IMR-90 (cell line): ENCODE measurements at regions of chr5 and their contacts with region 1.

Region 1: DNA sequence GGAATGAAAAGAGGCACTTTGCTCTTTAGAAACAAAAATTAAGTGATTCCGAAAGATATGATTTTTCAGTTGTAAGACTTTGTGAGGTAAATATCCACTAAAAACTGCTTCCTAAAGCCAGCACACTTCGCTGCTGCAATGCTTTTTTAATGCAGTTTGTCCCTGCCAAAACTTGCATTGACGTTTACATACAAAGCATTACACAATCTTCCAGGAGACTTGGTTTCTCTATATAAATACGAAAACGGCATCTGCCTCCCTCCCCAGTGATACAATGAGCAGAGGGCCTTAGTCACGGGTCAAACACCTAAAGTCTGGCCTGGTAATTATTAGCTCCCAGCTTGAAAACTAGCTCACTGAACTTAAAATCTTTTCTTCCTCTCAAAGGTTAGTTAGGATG is 170.7 kb downstream of the TSSK1B start:
- DNase-seq: peak; percentile 96
- ATAC-seq: peak; percentile 85
- H3K4me3 ChIP-seq: no peak overlapping the region
- H3K27ac ChIP-seq: peak overlapping the region; percentile 58; the same call in 1 of the 2 replicates
- H3K4me1 ChIP-seq: peaks cover 11% of the 10 kb centered on the region; the same call in 1 of the 2 replicates
- H3K27me3 ChIP-seq: no peaks in the 10 kb centered on the region
- CTCF ChIP-seq: no peak
- POLR2A ChIP-seq: no peak
- RAD21 ChIP-seq: no peak

Region 2: DNA sequence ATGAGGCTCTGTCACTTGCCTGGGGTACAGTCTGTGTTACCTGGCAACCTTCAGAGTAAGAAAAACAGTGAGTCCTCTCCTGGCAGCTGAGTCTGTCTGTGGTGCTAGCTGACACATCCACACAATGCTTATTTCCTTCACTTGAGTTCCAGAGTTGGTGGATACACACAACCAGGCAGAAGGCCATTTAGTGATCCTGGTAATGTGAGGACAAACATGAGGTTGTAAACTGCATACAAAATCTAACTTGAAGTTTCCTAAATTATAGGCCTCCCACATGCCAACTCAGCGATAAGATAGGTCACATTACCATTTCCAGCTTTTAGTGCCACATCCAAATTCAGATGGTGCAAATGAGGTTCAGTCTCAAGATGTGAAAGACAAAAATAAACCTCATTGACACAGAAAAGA is 161.9 kb before region 1 on chr5:
- CTCF ChIA-PET with region 1: no interaction called
- POLR2A ChIA-PET with region 1: no interaction called
- dilution Hi-C with region 1: no loop called
- in situ Hi-C with region 1: no loop called
- intact Hi-C with region 1: no loop called
- DNase-seq: peak; percentile 50
- ATAC-seq: no peak
- H3K4me3 ChIP-seq: no peak overlapping the region
- H3K27ac ChIP-seq: no peak overlapping the region
- H3K4me1 ChIP-seq: no peaks in the 10 kb centered on the region
- H3K27me3 ChIP-seq: no peaks in the 10 kb centered on the region
- CTCF ChIP-seq: no peak
- POLR2A ChIP-seq: no peak
- RAD21 ChIP-seq: no peak

Region 3: DNA sequence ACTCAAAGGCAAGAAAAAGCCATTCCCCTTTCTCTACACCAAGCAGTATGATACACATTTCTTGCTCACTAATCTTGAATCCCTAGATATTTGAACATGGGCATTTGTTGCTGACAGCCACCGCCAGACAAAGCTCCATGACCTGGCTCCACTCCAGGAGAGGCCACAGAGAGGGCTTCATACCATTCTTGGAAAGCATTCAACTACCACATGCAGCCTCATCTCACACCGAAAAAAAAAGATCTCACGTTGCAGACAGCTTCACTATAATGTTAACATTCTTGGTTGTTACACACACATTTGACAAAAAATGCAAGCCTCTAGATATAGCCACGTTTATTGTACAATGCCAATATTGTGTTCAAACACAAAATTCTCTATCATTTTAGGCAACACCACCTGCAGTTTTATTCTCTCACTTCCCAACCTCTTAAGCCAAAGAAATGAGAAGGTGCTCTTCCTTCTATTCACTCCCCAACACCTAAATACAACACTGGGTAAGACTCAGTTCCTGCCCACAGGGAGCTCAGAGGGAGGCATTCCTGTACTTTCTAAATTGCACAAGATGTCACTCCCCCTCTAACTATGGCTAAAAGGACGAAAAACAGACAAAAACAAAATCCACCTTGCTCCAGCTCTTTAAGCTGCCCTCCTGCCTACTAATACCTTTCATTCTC is 51.7 kb before region 1 on chr5:
- CTCF ChIA-PET with region 1: no interaction called
- POLR2A ChIA-PET with region 1: no interaction called
- dilution Hi-C with region 1: no loop called
- in situ Hi-C with region 1: no loop called
- intact Hi-C with region 1: loop called (anchors 5 kb)
- DNase-seq: peak; percentile 73
- ATAC-seq: peak; percentile 30
- H3K4me3 ChIP-seq: no peak overlapping the region
- H3K27ac ChIP-seq: no peak overlapping the region
- H3K4me1 ChIP-seq: peaks cover 19% of the 10 kb centered on the region
- H3K27me3 ChIP-seq: no peaks in the 10 kb centered on the region; the same call in 1 of the 2 replicates
- CTCF ChIP-seq: no peak
- POLR2A ChIP-seq: no peak
- RAD21 ChIP-seq: no peak